GM12878 (cell line): ENCODE measurements at regions of chr4 and their contacts with region 1.

Region 1: DNA sequence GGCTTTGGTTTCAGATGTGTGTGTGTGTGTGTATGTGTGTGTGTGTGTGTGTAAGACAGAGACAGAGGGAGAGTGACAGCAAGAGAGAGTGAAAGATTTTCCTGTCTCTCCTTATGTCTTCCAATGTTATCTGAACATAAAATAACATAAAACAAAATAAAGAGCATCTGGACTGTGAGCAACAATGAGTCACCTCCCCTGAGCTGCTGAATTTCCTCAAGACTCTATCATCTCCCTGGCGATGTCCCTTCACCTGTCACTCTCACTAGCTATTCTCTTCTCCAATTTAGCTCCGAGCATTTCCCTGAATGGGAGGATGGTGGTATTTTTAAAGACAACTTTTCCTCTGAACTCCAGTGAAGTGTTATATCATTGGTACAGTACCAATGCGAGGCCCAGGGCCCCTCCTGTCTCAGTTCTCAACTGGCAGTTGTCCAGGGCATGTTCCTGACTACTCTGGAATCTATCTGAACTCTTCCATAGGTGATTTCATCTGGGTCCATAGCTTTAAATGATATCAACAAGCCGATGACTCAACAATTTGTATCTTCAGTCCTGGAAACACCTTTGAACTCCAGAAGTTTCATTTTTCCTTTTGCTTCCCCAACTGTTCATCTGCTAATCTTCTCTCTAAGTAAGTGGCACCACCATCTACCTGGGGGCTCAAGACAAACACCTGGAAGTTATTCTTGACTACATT is 195.0 kb upstream of the CLNK start:
- DNase-seq: no peak
- ATAC-seq: no peak
- H3K4me3 ChIP-seq: no peak overlapping the region
- H3K27ac ChIP-seq: no peak overlapping the region
- H3K4me1 ChIP-seq: no peaks in the 10 kb centered on the region
- H3K27me3 ChIP-seq: no peaks in the 10 kb centered on the region
- CTCF ChIP-seq: no peak
- EP300 ChIP-seq: no peak
- POLR2A ChIP-seq: no peak
- RAD21 ChIP-seq: no peak

Region 2: GRCh38 chr4:10622728-10623127 is 256.8 kb before region 1 on chr4:
- CTCF ChIA-PET with region 1: no interaction called
- POLR2A ChIA-PET with region 1: no interaction called
- RAD21 ChIA-PET with region 1: no interaction called
- SMC1A ChIA-PET with region 1: no interaction called
- in situ Hi-C with region 1: no loop called
- intact Hi-C with region 1: no loop called
- DNase-seq: peak; percentile 26
- ATAC-seq: peak; percentile 93
- H3K4me3 ChIP-seq: no peak overlapping the region
- H3K27ac ChIP-seq: no peak overlapping the region
- H3K4me1 ChIP-seq: no peaks in the 10 kb centered on the region
- H3K27me3 ChIP-seq: no peaks in the 10 kb centered on the region
- CTCF ChIP-seq: peak; percentile 49 to 70 (median 69)
- EP300 ChIP-seq: no peak
- POLR2A ChIP-seq: no peak
- RAD21 ChIP-seq: peak; percentile 90

Region 3: GRCh38 chr4:10893395-10893794 is 13.8 kb after region 1 on chr4:
- CTCF ChIA-PET with region 1: interaction called, 10 read pairs
- POLR2A ChIA-PET with region 1: no interaction called
- RAD21 ChIA-PET with region 1: no interaction called
- SMC1A ChIA-PET with region 1: interaction called, 9 read pairs
- in situ Hi-C with region 1: no loop called
- intact Hi-C with region 1: no loop called
- DNase-seq: peak; percentile 7
- ATAC-seq: peak; percentile 89
- H3K4me3 ChIP-seq: no peak overlapping the region
- H3K27ac ChIP-seq: no peak overlapping the region
- H3K4me1 ChIP-seq: no peaks in the 10 kb centered on the region
- H3K27me3 ChIP-seq: no peaks in the 10 kb centered on the region
- CTCF ChIP-seq: peak; percentile 38 to 57 (median 56); a peak in 5 of 6 replicates
- EP300 ChIP-seq: no peak
- POLR2A ChIP-seq: no peak
- RAD21 ChIP-seq: peak; percentile 66